Mammary epithelial cell (primary cell): ENCODE measurements at regions of chr2 and their contacts with region 1.

Region 1: GRCh38 chr2:62234755-62235655 is 39.1 kb downstream of the B3GNT2 start:
- DNase-seq: no peak
- H3K4me3 ChIP-seq: no peak overlapping the region
- H3K27ac ChIP-seq: no peak overlapping the region
- H3K4me1 ChIP-seq: no peaks in the 10 kb centered on the region
- H3K27me3 ChIP-seq: no peaks in the 10 kb centered on the region
- CTCF ChIP-seq: no peak

Region 2: GRCh38 chr2:62032096-62032495 is 202.9 kb before region 1 on chr2:
- CTCF ChIA-PET with region 1: no interaction called
- dilution Hi-C with region 1: no loop called
- in situ Hi-C with region 1: no loop called
- intact Hi-C with region 1: no loop called
- DNase-seq: peak; percentile 39
- H3K4me3 ChIP-seq: no peak overlapping the region
- H3K27ac ChIP-seq: no peak overlapping the region
- H3K4me1 ChIP-seq: no peaks in the 10 kb centered on the region
- H3K27me3 ChIP-seq: no peaks in the 10 kb centered on the region
- CTCF ChIP-seq: no peak

Region 3: DNA sequence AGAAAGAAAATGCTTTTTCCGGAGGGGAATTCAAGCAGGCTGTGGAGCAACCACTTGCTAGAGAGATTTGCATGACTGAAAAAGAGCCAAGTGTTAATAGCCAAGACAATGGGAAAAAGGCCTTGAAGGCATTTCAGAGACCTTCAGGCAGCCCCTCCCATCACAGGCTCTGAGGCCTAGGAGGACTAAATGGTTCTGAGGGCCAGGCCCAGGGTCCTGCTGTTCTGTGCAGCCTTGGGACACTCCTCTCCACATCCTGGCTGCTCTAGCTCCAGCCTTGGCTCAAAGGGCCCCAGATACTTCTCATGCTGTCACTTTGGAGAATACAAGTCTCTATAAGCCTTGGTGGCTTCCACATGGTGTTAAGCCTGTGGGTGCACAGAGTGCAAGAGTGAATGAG is 42.7 kb after region 1 on chr2:
- CTCF ChIA-PET with region 1: no interaction called
- dilution Hi-C with region 1: loop called (anchors 5 kb)
- in situ Hi-C with region 1: no loop called
- intact Hi-C with region 1: no loop called
- DNase-seq: no peak
- H3K4me3 ChIP-seq: no peak overlapping the region
- H3K27ac ChIP-seq: no peak overlapping the region
- H3K4me1 ChIP-seq: no peaks in the 10 kb centered on the region
- H3K27me3 ChIP-seq: no peaks in the 10 kb centered on the region
- CTCF ChIP-seq: no peak

Region 4: GRCh38 chr2:62334440-62335058 is 99.5 kb after region 1 on chr2:
- CTCF ChIA-PET with region 1: no interaction called
- dilution Hi-C with region 1: loop called (anchors 5 kb)
- in situ Hi-C with region 1: no loop called
- intact Hi-C with region 1: no loop called
- DNase-seq: no peak
- H3K4me3 ChIP-seq: no peak overlapping the region
- H3K27ac ChIP-seq: no peak overlapping the region
- H3K4me1 ChIP-seq: no peaks in the 10 kb centered on the region
- H3K27me3 ChIP-seq: no peaks in the 10 kb centered on the region
- CTCF ChIP-seq: no peak